HCT116 (cell line): ENCODE measurements at regions of chr5 and their contacts with region 1.

Region 1: GRCh38 chr5:139660923-139661814 is 13.0 kb downstream of the CXXC5 start:
- DNase-seq: peak; percentile 63
- ATAC-seq: peak; percentile 76
- H3K4me3 ChIP-seq: peak overlapping the region; percentile 42 to 53
- H3K27ac ChIP-seq: peak overlapping the region; percentile 97
- H3K4me1 ChIP-seq: peaks cover 72 to 87% of the 10 kb centered on the region in 2 experiments
- H3K27me3 ChIP-seq: no peaks in the 10 kb centered on the region
- CTCF ChIP-seq: no peak
- POLR2A ChIP-seq: no peak
- RAD21 ChIP-seq: no peak

Region 2: DNA sequence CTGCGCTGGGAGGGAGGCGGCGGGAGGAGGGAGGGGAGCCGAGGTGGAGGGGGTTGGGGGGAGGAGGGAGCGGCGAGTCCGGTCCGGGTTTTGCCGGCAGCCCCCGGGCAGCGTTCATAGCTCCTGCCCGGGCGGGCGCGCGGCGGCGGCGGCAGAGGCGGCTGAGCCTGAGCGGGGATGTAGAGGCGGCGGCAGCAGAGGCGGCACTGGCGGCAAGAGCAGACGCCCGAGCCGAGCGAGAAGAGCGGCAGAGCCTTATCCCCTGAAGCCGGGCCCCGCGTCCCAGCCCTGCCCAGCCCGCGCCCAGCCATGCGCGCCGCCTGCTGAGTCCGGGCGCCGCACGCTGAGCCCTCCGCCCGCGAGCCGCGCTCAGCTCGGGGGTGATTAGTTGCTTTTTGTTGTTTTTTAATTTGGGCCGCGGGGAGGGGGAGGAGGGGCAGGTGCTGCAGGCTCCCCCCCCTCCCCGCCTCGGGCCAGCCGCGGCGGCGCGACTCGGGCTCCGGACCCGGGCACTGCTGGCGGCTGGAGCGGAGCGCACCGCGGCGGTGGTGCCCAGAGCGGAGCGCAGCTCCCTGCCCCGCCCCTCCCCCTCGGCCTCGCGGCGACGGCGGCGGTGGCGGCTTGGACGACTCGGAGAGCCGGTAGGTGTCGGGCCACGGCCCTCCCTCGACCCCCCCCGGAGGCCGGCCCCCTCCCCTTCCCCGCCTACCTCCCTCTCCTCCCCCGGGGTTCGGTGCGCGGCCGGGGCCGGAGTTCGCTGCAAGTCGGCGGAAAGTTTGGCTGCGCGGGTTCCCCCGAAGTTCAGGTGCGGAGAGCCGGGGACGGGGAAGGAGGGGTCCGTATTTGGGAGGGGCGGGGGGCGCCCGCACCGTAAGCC is 12.7 kb before region 1 on chr5 and contains the start of gene CXXC5:
- CTCF ChIA-PET with region 1: interaction called, 12 read pairs
- POLR2A ChIA-PET with region 1: interaction called, 36 read pairs
- RAD21 ChIA-PET with region 1: interaction called, 3 to 10 read pairs
- intact Hi-C with region 1: no loop called
- DNase-seq: no peak
- ATAC-seq: peak; percentile 57
- H3K4me3 ChIP-seq: peak within 1 kb of the TSS; percentile 80 to 84
- H3K27ac ChIP-seq: peak within 1 kb of the TSS; percentile 88
- H3K4me1 ChIP-seq: peaks cover 52 to 63% of the 10 kb centered on the region in 2 experiments
- H3K27me3 ChIP-seq: no peaks in the 10 kb centered on the region
- CTCF ChIP-seq: no peak
- POLR2A ChIP-seq: no peak
- RAD21 ChIP-seq: no peak
- total RNA-seq, gene CXXC5: 43.1 TPM